ENCODE measurements at regions of chr10 and their contacts with region 1.

Region 1: GRCh38 chr10:34555653-34556052 is 259.4 kb downstream of the PARD3 start:
- DNase-seq: no peak
- H3K4me3 ChIP-seq: no peak overlapping the region
- H3K27ac ChIP-seq: no peak overlapping the region
- H3K4me1 ChIP-seq: no peaks in the 10 kb centered on the region
- H3K27me3 ChIP-seq: no peaks in the 10 kb centered on the region
- CTCF ChIP-seq: no peak
- POLR2A ChIP-seq: no peak

Region 2: GRCh38 chr10:34522546-34522945 is 33.1 kb before region 1 on chr10:
- intact Hi-C with region 1: loop called (anchors 2 kb)
- DNase-seq: no peak
- H3K4me3 ChIP-seq: no peak overlapping the region
- H3K27ac ChIP-seq: no peak overlapping the region
- H3K4me1 ChIP-seq: no peaks in the 10 kb centered on the region
- H3K27me3 ChIP-seq: no peaks in the 10 kb centered on the region
- CTCF ChIP-seq: no peak
- POLR2A ChIP-seq: no peak

Region 3: GRCh38 chr10:34627331-34627730 is 71.7 kb after region 1 on chr10:
- intact Hi-C with region 1: loop called (anchors 2 kb)
- DNase-seq: no peak
- H3K4me3 ChIP-seq: no peak overlapping the region
- H3K27ac ChIP-seq: no peak overlapping the region
- H3K4me1 ChIP-seq: peaks cover 0 to 3% of the 10 kb centered on the region in 2 donors
- H3K27me3 ChIP-seq: no peaks in the 10 kb centered on the region
- CTCF ChIP-seq: no peak
- POLR2A ChIP-seq: no peak

Region 4: GRCh38 chr10:35092851-35093250 is 537.2 kb after region 1 on chr10:
- intact Hi-C with region 1: no loop called
- DNase-seq: no peak
- H3K4me3 ChIP-seq: no peak overlapping the region
- H3K27ac ChIP-seq: no peak overlapping the region
- H3K4me1 ChIP-seq: peaks cover 0 to 7% of the 10 kb centered on the region in 2 donors
- H3K27me3 ChIP-seq: no peaks in the 10 kb centered on the region
- CTCF ChIP-seq: no peak
- POLR2A ChIP-seq: no peak

Measured in breast epithelium (tissue), 4 donors.